Dendritic cell treated with granulocyte-macrophage colony-stimulating factor and Interleukin-4, amounts not matched to agents 40 ng/mL and 50 ng/mL, for 4 days (primary cell): ENCODE measurements at regions of chr22 and their contacts with region 1.

Region 1: DNA sequence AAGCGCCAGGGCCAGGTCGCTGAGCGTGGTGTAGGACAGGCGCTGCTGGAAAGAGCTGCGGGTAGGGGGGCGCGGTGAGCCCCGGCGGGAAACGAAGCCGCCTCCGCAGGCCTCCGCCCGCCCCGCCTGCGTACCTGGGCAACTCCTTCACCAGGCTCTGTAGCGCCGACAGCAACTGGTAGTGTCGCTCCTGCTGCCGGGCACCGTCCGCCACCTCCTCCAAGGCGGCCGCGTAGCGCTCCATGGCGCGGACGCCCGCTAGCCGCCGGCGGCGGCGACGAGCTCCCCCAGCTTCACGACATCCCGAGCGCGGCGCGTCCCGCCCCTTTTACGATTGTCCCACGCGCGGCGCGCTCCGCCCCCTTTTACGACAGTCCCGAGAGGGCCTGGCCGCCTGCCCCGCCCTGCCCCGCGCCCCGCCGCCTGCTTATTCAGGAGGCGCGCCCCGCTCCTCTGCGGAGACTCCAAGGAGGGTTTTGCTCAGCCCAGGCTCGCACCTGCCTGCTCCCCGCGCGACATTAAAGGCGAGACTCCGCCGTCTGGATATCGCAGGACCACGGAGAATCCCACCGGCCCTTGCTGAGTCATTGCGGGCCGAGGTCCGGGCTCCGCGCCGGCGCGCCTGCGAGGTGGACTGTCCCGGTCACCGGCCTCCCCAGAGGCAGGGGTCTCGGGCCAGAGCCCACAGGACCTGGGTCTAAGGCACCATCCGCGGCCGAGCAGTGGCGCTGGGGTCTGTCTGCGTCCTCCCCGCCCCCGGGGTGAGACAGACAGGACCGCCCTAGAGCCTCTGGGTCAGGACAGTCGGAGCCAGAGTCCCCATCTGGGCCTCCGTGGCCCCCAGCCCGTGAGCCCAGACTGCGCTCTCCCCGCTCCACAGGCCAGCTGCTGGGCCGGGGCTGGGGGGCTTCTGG is at the start of gene DGCR6L:
- H3K4me3 Mint-ChIP-seq: peak within 1 kb of the TSS; percentile 89
- H3K27ac Mint-ChIP-seq: peak within 1 kb of the TSS; percentile 82
- H3K4me1 Mint-ChIP-seq: peaks cover 51% of the 10 kb centered on the region
- H3K27me3 Mint-ChIP-seq: no peaks in the 10 kb centered on the region

Region 2: DNA sequence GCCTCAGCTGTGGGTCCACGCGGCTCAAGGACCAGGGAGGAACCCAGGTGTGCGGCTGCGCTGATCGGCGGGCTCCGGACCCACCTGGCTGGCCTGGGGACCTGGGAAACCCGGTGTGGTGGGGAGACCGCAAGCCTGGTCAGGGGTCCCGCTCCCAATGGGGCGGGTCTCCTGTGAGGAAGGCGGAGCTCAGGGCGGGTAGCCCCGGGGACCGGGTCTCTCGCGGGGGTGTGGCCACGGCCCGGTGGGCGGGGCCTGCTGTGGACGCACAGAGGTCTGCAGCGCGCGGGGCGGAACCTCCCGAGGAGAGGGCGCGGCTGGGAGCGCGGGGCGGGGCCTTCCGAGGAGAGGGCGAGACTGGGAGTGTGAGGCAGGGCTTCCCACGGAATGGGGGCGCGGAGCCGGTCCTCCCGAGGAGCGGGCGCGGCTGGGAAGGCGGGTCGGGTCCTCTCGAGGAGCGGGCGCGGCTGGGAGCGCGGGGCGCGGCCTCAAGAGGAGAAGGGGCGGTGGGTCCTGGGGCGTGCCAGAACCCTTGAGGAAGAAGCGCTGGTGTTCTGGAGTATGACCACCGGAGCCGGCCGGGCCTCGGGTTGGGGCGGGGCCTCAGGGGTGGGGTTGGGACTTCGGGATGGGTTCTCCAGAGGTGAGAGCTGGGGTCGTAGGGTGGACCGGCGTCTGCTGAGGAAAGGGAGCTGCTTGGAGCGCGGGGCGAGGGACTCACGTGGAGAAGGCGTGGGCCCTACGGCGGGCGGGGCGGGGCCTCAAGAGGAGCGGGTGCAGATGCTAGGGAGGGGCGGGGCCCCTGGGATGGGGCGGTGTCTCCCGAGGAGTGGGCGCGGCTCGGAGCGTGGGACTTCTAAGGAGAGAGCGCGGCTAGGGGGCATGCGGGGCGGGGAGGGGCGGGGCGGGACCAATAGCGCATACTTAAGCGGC is 20.9 kb before region 1 on chr22:
- intact Hi-C with region 1: loop called (anchors 1 kb)
- H3K4me3 Mint-ChIP-seq: peak overlapping the region; percentile 92
- H3K27ac Mint-ChIP-seq: peak overlapping the region; percentile 74
- H3K4me1 Mint-ChIP-seq: no peaks in the 10 kb centered on the region
- H3K27me3 Mint-ChIP-seq: peaks cover 52% of the 10 kb centered on the region

Region 3: GRCh38 chr22:20507253-20508066 is 187.5 kb after region 1 on chr22 and contains the start of gene MED15:
- intact Hi-C with region 1: no loop called
- H3K4me3 Mint-ChIP-seq: peak within 1 kb of the TSS; percentile 93
- H3K27ac Mint-ChIP-seq: peak within 1 kb of the TSS; percentile 95
- H3K4me1 Mint-ChIP-seq: peaks cover 53% of the 10 kb centered on the region
- H3K27me3 Mint-ChIP-seq: no peaks in the 10 kb centered on the region